ENCODE measurements at regions of chr5 and their contacts with region 1.

Region 1: GRCh38 chr5:139422307-139422893 is 16.9 kb downstream of the DNAJC18 start:
- DNase-seq: peak in 1 of 2 experiments; percentile 56
- H3K4me3 ChIP-seq: no peak overlapping the region
- H3K27ac ChIP-seq: no peak overlapping the region
- H3K4me1 ChIP-seq: peaks cover 4 to 9% (median 6%) of the 10 kb centered on the region in 4 experiments; a peak in 4 of 7 replicates
- H3K27me3 ChIP-seq: no peaks in the 10 kb centered on the region
- CTCF ChIP-seq: peak in 2 of 3 experiments; percentile 88 to 94; a peak in 3 of 4 replicates
- EP300 ChIP-seq: no peak
- POLR2A ChIP-seq: no peak
- RAD21 ChIP-seq: peak; percentile 99 to 100

Region 2: GRCh38 chr5:139403787-139404483 is 18.5 kb before region 1 on chr5 and contains the start of gene SPATA24:
- CTCF ChIA-PET with region 1: interaction called, 69 read pairs
- POLR2A ChIA-PET with region 1: interaction called, 4 read pairs
- DNase-seq: peak; percentile 87 to 95
- H3K4me3 ChIP-seq: peak within 1 kb of the TSS; percentile 72 to 84 (median 80)
- H3K27ac ChIP-seq: peak within 1 kb of the TSS; percentile 94
- H3K4me1 ChIP-seq: peaks cover 0 to 8% (median 4%) of the 10 kb centered on the region in 4 experiments; a peak in 6 of 7 replicates
- H3K27me3 ChIP-seq: 0 out of 7 replicates have a peak, but pooled peaks cover 0 to 4% (median 0%) of the 10 kb centered on the region in 4 experiments
- CTCF ChIP-seq: no peak
- EP300 ChIP-seq: no peak
- POLR2A ChIP-seq: peak in 1 of 2 experiments; percentile 74; a peak in 2 of 3 replicates
- RAD21 ChIP-seq: no peak
- total RNA-seq, gene SPATA24: 9.4 and 11.6 TPM in 2 replicates

Region 3: GRCh38 chr5:139410993-139411828 is 11.2 kb before region 1 on chr5:
- CTCF ChIA-PET with region 1: interaction called, 69 read pairs
- POLR2A ChIA-PET with region 1: interaction called, 5 read pairs
- DNase-seq: no peak
- H3K4me3 ChIP-seq: no peak overlapping the region
- H3K27ac ChIP-seq: no peak overlapping the region
- H3K4me1 ChIP-seq: no peaks in the 10 kb centered on the region
- H3K27me3 ChIP-seq: 0 out of 7 replicates have a peak, but pooled peaks cover 0 to 4% (median 0%) of the 10 kb centered on the region in 4 experiments
- CTCF ChIP-seq: no peak
- EP300 ChIP-seq: no peak
- POLR2A ChIP-seq: no peak
- RAD21 ChIP-seq: no peak

Region 4: DNA sequence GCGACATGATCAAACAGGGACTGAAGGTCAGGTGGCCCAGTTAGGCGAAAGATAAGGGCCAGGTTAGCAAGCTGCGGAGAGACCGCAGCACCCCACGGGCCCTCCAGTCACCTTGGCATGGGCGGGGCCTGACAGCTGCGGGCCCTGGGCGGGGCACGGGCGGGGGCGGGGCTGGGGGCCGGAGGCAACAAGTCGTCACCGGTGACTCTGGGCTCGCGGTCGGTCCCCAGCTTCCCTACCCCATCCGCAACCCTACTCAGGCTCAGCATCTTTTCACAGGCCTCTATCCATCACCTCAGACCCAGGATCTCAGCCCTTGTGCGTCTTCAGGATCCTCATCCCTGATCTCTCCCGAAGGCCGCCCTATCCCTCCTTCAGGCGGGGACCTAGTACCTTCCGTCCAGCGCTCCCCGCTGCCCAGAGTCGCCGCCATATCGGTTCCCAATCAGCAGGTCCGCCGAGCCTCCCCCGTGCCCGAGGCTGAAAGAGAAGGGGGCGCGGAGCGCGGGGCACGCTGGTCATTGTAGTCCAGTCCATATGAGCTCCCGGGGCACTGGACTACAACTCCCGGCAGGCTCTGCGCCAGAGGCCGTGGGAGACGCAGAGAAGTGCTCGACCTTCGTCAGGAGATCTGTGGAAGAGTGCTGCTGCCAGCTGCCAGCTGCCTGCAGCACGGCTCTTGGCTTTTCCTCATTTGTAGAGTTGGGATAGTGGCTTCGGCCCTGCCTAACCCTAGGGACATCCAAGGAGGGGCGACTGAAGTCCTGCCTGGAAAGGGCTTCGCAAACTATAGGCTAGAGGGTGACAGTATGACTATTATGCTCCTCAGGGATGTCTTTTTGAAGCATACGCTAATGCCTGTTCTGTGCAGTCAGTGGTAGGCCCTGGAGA is 16.9 kb after region 1 on chr5 and contains the start of gene DNAJC18:
- CTCF ChIA-PET with region 1: interaction called, 53 read pairs
- POLR2A ChIA-PET with region 1: interaction called, 15 read pairs
- DNase-seq: peak; percentile 76 to 97
- H3K4me3 ChIP-seq: peak within 1 kb of the TSS; percentile 77 to 89 (median 84)
- H3K27ac ChIP-seq: peak within 1 kb of the TSS; percentile 93; the same call in 1 of the 2 replicates
- H3K4me1 ChIP-seq: peaks cover 0 to 8% (median 2%) of the 10 kb centered on the region in 4 experiments; a peak in 4 of 7 replicates
- H3K27me3 ChIP-seq: no peaks in the 10 kb centered on the region
- CTCF ChIP-seq: no peak
- EP300 ChIP-seq: no peak
- POLR2A ChIP-seq: peak; percentile 86 to 87
- RAD21 ChIP-seq: peak in 1 of 2 experiments; percentile 1; a peak in 1 of 4 replicates
- total RNA-seq, gene DNAJC18: 22.0 and 29.2 TPM in 2 replicates

Region 5: GRCh38 chr5:139482050-139482889 is 59.9 kb after region 1 on chr5 and contains the start of gene STING1:
- CTCF ChIA-PET with region 1: interaction called, 38 read pairs
- POLR2A ChIA-PET with region 1: interaction called, 3 read pairs
- DNase-seq: no peak
- H3K4me3 ChIP-seq: no peak within 1 kb of the TSS
- H3K27ac ChIP-seq: no peak within 1 kb of the TSS
- H3K4me1 ChIP-seq: peaks cover 0 to 10% (median 5%) of the 10 kb centered on the region in 4 experiments; a peak in 5 of 7 replicates
- H3K27me3 ChIP-seq: no peaks in the 10 kb centered on the region
- CTCF ChIP-seq: no peak
- EP300 ChIP-seq: no peak
- POLR2A ChIP-seq: no peak
- RAD21 ChIP-seq: no peak
- total RNA-seq, gene STING1: 0.26 and 0.42 TPM in 2 replicates

Region 6: GRCh38 chr5:139492700-139493192 is 70.3 kb after region 1 on chr5:
- CTCF ChIA-PET with region 1: interaction called, 17 read pairs
- POLR2A ChIA-PET with region 1: interaction called, 5 read pairs
- DNase-seq: no peak
- H3K4me3 ChIP-seq: no peak overlapping the region
- H3K27ac ChIP-seq: no peak overlapping the region
- H3K4me1 ChIP-seq: no peaks in the 10 kb centered on the region
- H3K27me3 ChIP-seq: no peaks in the 10 kb centered on the region
- CTCF ChIP-seq: no peak
- EP300 ChIP-seq: no peak
- POLR2A ChIP-seq: no peak
- RAD21 ChIP-seq: no peak

Region 7: GRCh38 chr5:139501381-139501780 is 79.0 kb after region 1 on chr5:
- CTCF ChIA-PET with region 1: interaction called, 40 read pairs
- POLR2A ChIA-PET with region 1: interaction called, 5 read pairs
- DNase-seq: no peak
- H3K4me3 ChIP-seq: no peak overlapping the region
- H3K27ac ChIP-seq: no peak overlapping the region
- H3K4me1 ChIP-seq: peaks cover 0 to 10% (median 3%) of the 10 kb centered on the region in 4 experiments; a peak in 4 of 7 replicates
- H3K27me3 ChIP-seq: no peaks in the 10 kb centered on the region
- CTCF ChIP-seq: no peak
- EP300 ChIP-seq: no peak
- POLR2A ChIP-seq: no peak
- RAD21 ChIP-seq: no peak